Lower lobe of right lung (tissue), 2 donors: ENCODE measurements at regions of chr5 and their contacts with region 1.

Region 1: DNA sequence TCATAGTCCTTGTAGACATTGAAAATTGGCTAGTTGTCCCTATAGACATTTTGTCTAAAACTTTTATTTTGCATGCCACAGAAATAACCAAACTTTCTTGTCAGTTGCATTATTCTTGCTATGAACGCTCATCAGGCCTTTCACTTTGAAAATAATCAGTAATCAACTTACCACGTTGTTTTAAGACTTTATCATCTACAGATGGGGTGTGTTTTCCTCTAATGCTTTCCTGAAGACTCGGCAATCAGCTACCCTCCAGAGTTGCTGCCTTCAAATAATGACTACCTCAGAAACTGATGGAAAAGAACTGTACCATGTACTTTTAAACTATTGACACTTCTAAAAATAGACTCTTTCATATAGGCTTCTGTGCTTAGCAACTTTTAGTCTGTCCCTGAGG is 33.5 kb upstream of the HSPB3 start:
- DNase-seq: no peak
- ATAC-seq: no peak
- H3K4me3 ChIP-seq: no peak overlapping the region
- H3K27ac ChIP-seq: no peak overlapping the region
- H3K4me1 ChIP-seq: no peaks in the 10 kb centered on the region
- H3K27me3 ChIP-seq: peaks cover 6% of the 10 kb centered on the region
- CTCF ChIP-seq: no peak

Region 2: DNA sequence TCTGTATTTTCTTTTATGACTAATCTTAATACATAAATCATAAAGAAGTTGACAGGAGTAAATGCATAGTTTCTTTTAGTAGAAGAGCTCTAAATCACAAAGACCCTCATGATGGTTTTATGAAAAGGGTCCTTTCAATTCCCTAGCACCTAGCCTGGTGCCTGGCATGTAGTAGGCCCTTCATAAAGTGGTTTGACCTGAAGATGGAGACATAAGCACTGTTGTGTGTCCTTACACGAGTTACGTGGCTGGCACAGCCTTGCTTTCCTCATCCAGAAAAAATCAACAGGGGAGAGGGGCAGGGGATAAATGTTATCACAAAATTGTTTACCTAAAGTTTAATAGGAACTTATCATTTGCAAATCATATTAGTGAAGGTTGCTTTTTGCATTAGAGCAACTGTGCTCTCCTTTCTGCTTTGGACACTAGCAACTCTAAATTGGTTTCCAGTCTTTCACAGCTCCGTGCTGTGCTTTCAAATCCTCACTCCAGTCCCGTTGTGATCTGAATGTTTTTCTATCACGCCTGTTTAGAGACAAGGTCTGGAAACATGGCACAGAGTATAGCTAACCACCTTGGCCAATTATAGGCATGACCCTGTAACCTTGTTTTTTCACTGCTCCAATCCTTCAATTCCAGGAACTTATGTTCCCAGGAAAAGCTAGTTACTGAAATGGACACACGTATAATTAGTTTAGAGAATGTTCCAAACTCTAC is 167.3 kb before region 1 on chr5:
- intact Hi-C with region 1: loop called (anchors 5 kb)
- DNase-seq: no peak
- ATAC-seq: peak in 1 of 2 donors; percentile 65
- H3K4me3 ChIP-seq: no peak overlapping the region
- H3K27ac ChIP-seq: no peak overlapping the region
- H3K4me1 ChIP-seq: peaks cover 25% of the 10 kb centered on the region
- H3K27me3 ChIP-seq: no peaks in the 10 kb centered on the region
- CTCF ChIP-seq: peak; percentile 17

Region 3: DNA sequence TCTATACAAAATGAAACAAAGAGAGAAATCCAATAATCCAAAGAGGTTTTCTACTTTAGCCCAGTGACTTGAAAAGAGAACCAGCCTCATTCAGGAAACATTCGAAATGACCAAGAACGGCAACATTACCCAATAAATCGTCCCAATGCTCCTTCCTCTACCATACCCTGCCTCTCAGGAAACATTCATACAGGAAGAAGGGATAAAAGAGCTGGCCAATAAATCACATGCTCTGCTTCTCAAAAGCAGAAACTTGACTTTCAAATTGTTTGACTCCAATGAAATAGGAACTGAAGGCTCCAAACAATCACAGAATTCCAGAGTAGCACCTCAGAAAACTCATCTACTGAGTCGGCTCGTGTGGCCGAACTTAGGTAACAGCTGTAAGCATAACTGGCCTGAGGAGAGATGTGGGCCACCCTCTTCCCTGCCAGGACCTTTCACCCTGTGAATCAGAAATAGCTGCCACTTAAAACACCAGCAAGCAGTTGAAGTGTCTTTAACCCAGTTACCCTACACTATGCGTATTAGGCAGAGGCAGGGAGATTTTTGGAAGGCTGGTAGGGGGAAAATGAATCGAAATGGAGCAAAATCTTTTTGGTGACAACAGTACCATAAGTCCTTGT is 126.2 kb before region 1 on chr5:
- intact Hi-C with region 1: no loop called
- DNase-seq: no peak
- ATAC-seq: peak; percentile 88 to 96
- H3K4me3 ChIP-seq: no peak overlapping the region
- H3K27ac ChIP-seq: peak overlapping the region; percentile 55
- H3K4me1 ChIP-seq: peaks cover 38% of the 10 kb centered on the region
- H3K27me3 ChIP-seq: no peaks in the 10 kb centered on the region
- CTCF ChIP-seq: no peak